ENCODE measurements at regions of chr1 and their contacts with region 1.

Region 1: DNA sequence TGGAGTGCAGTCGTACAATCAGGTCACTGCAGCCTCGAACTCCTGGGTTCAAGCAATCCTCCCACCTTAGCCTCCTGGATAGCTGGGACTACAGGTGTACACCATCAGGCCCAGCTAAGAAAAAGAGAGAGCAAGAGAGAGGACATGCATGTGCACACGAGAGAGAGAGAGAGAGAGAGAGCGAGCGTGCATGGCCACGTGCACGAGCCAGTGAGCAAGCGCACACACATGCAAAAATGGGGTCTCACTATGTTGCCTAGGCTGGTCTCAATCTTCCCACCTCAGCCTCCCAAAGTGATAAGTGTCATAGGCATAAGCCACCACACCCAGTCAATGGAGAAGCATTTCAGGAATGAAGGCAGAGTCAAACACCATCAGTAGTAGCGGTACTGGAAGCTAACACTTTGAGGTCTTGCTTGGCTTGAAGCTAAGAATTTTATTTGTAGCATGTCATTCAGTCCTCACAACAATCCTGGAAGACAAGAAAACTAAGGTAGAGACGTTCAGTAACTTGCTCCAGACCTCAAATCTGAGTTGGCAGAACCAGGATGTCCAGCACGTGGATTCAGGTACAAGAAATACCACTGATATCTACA is 14.5 kb downstream of the GNB1 start:
- DNase-seq: no peak
- H3K4me3 Mint-ChIP-seq: no peak overlapping the region
- H3K27ac Mint-ChIP-seq: peak overlapping the region; percentile 79
- H3K4me1 Mint-ChIP-seq: peaks cover 80% of the 10 kb centered on the region
- H3K27me3 Mint-ChIP-seq: no peaks in the 10 kb centered on the region

Region 2: GRCh38 chr1:1597275-1597930 is 279.0 kb before region 1 on chr1:
- CTCF ChIA-PET with region 1: no interaction called
- POLR2A ChIA-PET with region 1: no interaction called
- intact Hi-C with region 1: no loop called
- DNase-seq: peak; percentile 42
- H3K4me3 Mint-ChIP-seq: no peak overlapping the region
- H3K27ac Mint-ChIP-seq: no peak overlapping the region
- H3K4me1 Mint-ChIP-seq: peaks cover 10% of the 10 kb centered on the region
- H3K27me3 Mint-ChIP-seq: peaks cover 5% of the 10 kb centered on the region

Region 3: DNA sequence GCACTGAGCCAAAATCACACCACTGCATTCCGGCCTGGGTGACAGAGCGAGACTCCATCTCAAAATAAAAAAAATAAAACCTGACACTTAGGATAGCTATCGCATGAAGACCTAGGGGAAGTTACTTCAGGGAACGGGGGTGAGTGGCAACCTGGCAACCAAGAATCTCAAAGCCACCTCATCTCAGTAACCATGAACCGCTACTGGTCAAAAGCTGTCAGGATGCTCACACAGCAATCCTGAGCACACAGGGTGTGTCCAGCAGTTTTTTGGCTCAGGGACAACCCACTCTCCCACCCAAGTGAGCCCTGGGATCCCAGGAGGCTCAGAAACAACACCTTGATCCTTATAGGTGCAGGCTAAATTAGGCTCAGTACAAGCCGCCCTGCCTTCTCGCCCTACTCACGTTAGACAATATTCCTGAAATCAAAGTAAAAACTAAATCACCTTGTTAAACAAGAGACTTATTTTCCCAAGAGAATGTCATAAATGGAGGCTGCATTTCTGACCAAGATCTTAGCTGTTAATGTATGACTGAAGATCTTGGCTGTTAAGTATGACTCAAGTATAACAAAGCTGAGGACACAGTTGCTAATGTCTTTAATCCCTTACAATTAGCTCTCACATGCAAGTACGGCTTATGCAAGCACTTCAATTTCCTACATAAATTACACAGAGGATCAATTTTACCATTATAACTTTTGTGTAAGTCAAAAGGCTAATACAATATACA is 49.9 kb before region 1 on chr1:
- CTCF ChIA-PET with region 1: no interaction called
- POLR2A ChIA-PET with region 1: interaction called, 3 read pairs
- intact Hi-C with region 1: loop called (anchors 1 kb)
- DNase-seq: no peak
- H3K4me3 Mint-ChIP-seq: no peak overlapping the region
- H3K27ac Mint-ChIP-seq: peak overlapping the region; percentile 51
- H3K4me1 Mint-ChIP-seq: peaks cover 58% of the 10 kb centered on the region
- H3K27me3 Mint-ChIP-seq: no peaks in the 10 kb centered on the region

Region 4: GRCh38 chr1:1832820-1833219 is 43.6 kb before region 1 on chr1:
- CTCF ChIA-PET with region 1: no interaction called
- POLR2A ChIA-PET with region 1: no interaction called
- intact Hi-C with region 1: loop called (anchors 1 kb)
- DNase-seq: peak; percentile 23
- H3K4me3 Mint-ChIP-seq: no peak overlapping the region
- H3K27ac Mint-ChIP-seq: peak overlapping the region; percentile 62
- H3K4me1 Mint-ChIP-seq: peaks cover 38% of the 10 kb centered on the region
- H3K27me3 Mint-ChIP-seq: no peaks in the 10 kb centered on the region

Region 5: GRCh38 chr1:1841575-1841995 is 34.8 kb before region 1 on chr1:
- CTCF ChIA-PET with region 1: no interaction called
- POLR2A ChIA-PET with region 1: no interaction called
- intact Hi-C with region 1: loop called (anchors 5 kb)
- DNase-seq: no peak
- H3K4me3 Mint-ChIP-seq: no peak overlapping the region
- H3K27ac Mint-ChIP-seq: peak overlapping the region; percentile 70
- H3K4me1 Mint-ChIP-seq: peaks cover 39% of the 10 kb centered on the region
- H3K27me3 Mint-ChIP-seq: no peaks in the 10 kb centered on the region

Region 6: DNA sequence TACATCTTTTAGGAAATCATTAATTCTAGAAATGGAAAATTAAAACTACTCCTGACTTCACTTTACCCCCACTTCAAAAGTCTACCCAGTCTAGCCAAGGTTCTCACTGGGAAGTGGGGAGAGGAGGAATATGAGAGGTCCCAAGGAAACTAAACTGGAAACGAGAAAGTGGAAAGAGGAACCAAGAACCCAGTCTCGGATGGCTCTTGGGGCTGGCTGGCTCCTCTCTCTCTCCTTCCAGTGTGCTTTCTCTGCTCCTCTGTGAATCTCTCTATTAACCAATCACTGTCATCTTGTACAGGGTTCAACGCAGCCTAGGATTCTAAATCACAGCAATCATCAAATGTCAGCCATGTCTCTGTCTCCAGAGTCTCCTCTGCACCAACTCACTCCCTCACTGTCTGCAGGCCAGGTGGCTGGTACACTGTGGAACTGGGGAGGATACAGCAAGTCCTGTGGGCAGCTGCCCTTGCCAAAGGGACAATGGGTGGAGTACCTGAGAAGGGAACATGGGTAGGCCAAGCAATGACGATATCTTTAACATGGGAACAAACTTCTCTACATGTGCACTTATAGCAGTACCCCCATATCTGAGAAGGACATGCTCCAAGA is 19.2 kb before region 1 on chr1:
- CTCF ChIA-PET with region 1: interaction called, 3 read pairs
- POLR2A ChIA-PET with region 1: no interaction called
- intact Hi-C with region 1: loop called (anchors 2 kb)
- DNase-seq: no peak
- H3K4me3 Mint-ChIP-seq: no peak overlapping the region
- H3K27ac Mint-ChIP-seq: no peak overlapping the region
- H3K4me1 Mint-ChIP-seq: peaks cover 57% of the 10 kb centered on the region
- H3K27me3 Mint-ChIP-seq: no peaks in the 10 kb centered on the region

Region 7: DNA sequence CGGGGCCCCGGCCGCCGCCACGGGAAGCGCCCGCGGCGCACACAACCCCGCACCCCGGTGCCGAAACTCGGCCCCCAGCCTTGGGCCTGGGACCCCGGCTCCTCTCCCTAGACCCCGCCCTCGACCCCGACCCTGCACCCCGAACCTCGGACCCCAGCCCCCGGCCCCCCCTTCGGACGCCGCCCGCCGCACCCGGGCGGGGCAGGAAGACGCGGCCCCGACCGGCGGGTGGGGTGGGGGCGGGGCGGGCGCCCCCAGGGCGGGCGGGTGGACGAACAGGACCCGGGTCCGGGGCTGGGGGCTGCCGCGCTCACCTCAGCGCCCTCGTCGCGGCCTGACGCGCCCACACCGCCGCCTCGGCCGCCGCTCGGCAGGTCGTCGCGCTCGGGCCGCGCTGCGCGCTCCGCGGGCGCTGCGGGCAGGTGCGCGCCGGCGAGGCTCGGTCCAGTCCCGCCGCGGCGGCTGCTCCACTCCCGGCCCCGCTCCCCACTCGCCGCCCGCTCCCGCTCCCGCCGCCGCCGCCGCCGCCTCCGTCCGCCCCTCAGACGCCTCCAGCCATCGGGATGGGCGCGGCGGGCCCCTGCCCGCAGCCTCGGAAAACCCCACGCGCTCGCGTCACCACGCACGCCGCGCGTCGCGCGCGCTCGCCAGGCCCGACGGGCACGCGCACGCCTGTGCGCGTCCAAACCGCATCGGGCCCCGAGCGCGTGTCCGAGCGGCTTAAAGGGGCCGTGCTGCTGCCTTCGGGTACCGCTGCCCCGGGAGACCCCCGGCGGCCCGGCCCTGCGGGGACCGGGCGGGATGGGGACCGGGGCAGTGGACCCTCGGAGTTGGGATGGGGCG is 14.3 kb after region 1 on chr1 and contains the start of gene GNB1:
- CTCF ChIA-PET with region 1: interaction called, 3 read pairs
- POLR2A ChIA-PET with region 1: interaction called, 9 read pairs
- intact Hi-C with region 1: loop called (anchors 1 kb)
- DNase-seq: peak; percentile 90
- H3K4me3 Mint-ChIP-seq: peak within 1 kb of the TSS; percentile 81
- H3K27ac Mint-ChIP-seq: peak within 1 kb of the TSS; percentile 88
- H3K4me1 Mint-ChIP-seq: peaks cover 49% of the 10 kb centered on the region
- H3K27me3 Mint-ChIP-seq: no peaks in the 10 kb centered on the region
- total RNA-seq, gene GNB1: 396 to 403 TPM

Measured in activated CD4-positive, alpha-beta memory T cell treated with anti-CD3 and anti-CD28 coated beads for 36 hours (primary cell).